Activated naive CD4-positive, alpha-beta T cell treated with anti-CD3 and anti-CD28 coated beads for 36 hours (primary cell): ENCODE measurements at regions of chr2 and their contacts with region 1.

Region 1: GRCh38 chr2:24084386-24085361 is at the start of gene TP53I3:
- DNase-seq: peak; percentile 80
- H3K4me3 Mint-ChIP-seq: peak within 1 kb of the TSS; percentile 85
- H3K27ac Mint-ChIP-seq: peak within 1 kb of the TSS; percentile 27
- H3K4me1 Mint-ChIP-seq: peaks cover 8% of the 10 kb centered on the region
- H3K27me3 Mint-ChIP-seq: no peaks in the 10 kb centered on the region
- total RNA-seq, gene TP53I3: 0.60 to 0.81 TPM

Region 2: DNA sequence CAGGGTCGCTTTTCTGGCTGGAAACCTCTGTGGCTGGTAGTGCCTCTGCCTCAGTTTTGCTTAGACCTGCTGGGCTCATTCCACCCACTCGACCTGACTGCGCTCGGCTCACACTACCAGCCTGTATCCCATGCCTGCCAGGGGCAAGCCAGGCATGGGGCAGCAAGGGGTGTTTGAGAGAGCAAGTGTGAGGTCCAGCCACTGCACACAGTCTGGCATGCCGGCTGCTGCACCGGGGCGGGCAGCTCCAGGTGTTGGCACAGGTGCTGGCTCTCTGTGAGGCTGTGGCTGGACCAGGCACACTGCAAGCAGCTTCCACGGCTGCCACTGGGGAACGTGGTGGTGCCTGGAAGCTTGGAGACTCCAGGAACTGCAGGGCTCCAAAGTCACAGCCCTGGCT is 248.7 kb before region 1 on chr2:
- CTCF ChIA-PET with region 1: interaction called, 10 read pairs
- intact Hi-C with region 1: no loop called
- DNase-seq: no peak
- H3K4me3 Mint-ChIP-seq: no peak overlapping the region
- H3K27ac Mint-ChIP-seq: no peak overlapping the region
- H3K4me1 Mint-ChIP-seq: no peaks in the 10 kb centered on the region
- H3K27me3 Mint-ChIP-seq: no peaks in the 10 kb centered on the region

Region 3: GRCh38 chr2:24021193-24021998 is 63.3 kb before region 1 on chr2:
- CTCF ChIA-PET with region 1: no interaction called
- intact Hi-C with region 1: loop called (anchors 1 kb)
- DNase-seq: peak; percentile 44
- H3K4me3 Mint-ChIP-seq: no peak overlapping the region
- H3K27ac Mint-ChIP-seq: no peak overlapping the region
- H3K4me1 Mint-ChIP-seq: no peaks in the 10 kb centered on the region
- H3K27me3 Mint-ChIP-seq: no peaks in the 10 kb centered on the region

Region 4: DNA sequence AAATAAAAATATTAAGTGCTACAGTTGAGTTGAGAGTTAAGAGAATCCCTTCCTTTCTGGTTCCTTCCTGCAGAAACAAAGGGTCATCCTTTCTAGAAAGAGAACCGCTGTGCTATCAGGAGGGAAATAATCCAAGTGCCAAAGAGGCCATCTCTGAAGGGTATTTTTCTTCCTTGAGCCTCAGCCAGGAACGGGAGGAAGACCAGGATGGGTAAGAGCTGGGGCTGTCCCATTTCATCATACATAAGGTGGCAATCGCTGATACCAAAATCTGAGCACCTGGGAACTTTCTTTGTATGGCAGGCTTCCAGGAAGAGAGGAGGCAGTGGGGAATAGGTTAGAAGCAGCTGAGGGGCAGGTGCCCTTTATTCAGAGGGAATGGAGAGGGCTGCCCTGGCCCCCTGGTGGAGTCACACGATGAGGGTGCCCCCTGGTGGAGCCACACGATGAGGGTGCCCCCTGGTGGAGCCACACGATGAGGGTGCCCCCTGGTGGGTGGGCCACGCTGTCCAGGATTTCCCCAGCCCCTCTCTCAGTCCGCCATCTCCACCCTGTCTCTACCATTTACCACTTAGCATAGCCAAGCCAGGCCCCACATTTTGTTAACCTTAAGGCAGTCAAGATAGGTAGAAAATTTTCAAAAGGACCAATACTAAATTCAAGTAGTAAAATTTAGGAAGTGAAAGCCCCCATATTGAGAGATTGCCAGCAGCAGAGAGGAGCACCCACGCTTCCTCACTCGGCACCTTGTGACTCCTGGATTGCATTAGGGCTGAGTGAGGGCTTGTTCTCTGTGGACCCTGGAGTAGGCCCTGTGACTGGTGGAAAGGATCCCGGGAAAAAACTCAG is 79.7 kb after region 1 on chr2:
- CTCF ChIA-PET with region 1: interaction called, 7 read pairs
- intact Hi-C with region 1: loop called (anchors 1 kb)
- DNase-seq: peak; percentile 54
- H3K4me3 Mint-ChIP-seq: no peak overlapping the region
- H3K27ac Mint-ChIP-seq: no peak overlapping the region
- H3K4me1 Mint-ChIP-seq: no peaks in the 10 kb centered on the region
- H3K27me3 Mint-ChIP-seq: no peaks in the 10 kb centered on the region